CD4-positive, alpha-beta T cell (primary cell): ENCODE measurements at regions of chr2 and their contacts with region 1.

Region 1: DNA sequence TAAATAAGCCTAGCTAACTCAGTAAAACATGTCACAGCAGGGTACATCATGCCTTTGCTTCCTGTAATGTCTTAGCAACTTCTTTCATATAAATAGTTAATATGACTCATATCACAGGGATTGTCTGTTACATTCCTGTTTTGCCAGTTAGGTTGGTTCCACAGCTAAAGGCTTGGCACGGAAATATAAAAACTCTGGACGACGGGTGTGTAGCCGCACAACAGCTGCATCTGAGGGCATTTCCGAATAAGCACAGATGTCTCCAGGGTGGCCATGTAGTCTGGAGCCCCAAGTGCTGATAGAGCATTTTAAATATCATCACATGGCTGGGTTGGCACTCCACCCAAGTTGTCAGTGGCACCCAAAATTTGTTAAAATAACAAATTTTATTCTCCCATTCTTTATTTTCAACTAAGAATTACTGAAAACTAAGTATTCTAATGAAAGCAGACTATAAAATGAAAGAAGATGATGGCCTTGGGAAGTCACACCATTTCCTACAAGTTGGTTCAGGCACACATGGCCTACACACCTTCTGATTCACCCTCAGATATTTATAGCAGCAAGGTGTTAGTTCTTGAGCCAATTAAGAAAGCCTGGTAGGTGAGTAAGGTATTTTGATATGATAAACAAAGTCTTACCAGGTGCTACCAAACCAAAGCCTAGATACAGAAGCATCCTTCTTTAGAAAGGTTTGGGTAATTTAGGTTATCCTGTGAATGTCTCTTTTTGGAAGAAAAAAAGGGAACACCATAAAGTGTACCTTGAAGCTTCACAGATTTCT is 61.8 kb upstream of the STK17B start:
- DNase-seq: peak in 1 of 14 experiments; percentile 40
- ATAC-seq: no peak
- H3K4me3 ChIP-seq: no peak overlapping the region
- H3K4me3 Mint-ChIP-seq: peak overlapping the region; percentile 23
- H3K27ac ChIP-seq: peak overlapping the region; percentile 19 to 63
- H3K27ac Mint-ChIP-seq: peak overlapping the region; percentile 97
- H3K4me1 ChIP-seq: peaks cover 58% of the 10 kb centered on the region
- H3K4me1 Mint-ChIP-seq: peaks cover 94% of the 10 kb centered on the region
- H3K27me3 ChIP-seq: no peaks in the 10 kb centered on the region
- H3K27me3 Mint-ChIP-seq: no peaks in the 10 kb centered on the region
- CTCF ChIP-seq: no peak

Region 2: GRCh38 chr2:196182439-196183171 is 50.6 kb before region 1 on chr2:
- CTCF ChIA-PET with region 1: interaction called, 3 read pairs
- POLR2A ChIA-PET with region 1: interaction called, 60 read pairs
- intact Hi-C with region 1: loop called in 1 of 2 experiments (anchors 2 kb)
- DNase-seq: peak in 2 of 14 experiments; percentile 60 to 74
- ATAC-seq: no peak
- H3K4me3 ChIP-seq: no peak overlapping the region
- H3K4me3 Mint-ChIP-seq: peak overlapping the region; percentile 76
- H3K27ac ChIP-seq: peak overlapping the region; percentile 68 to 79
- H3K27ac Mint-ChIP-seq: peak overlapping the region; percentile 94
- H3K4me1 ChIP-seq: peaks cover 76% of the 10 kb centered on the region
- H3K4me1 Mint-ChIP-seq: peaks cover 94% of the 10 kb centered on the region
- H3K27me3 ChIP-seq: no peaks in the 10 kb centered on the region
- H3K27me3 Mint-ChIP-seq: no peaks in the 10 kb centered on the region
- CTCF ChIP-seq: no peak

Region 3: GRCh38 chr2:196205881-196206435 is 27.3 kb before region 1 on chr2:
- CTCF ChIA-PET with region 1: interaction called, 4 read pairs
- POLR2A ChIA-PET with region 1: interaction called, 10 read pairs
- intact Hi-C with region 1: no loop called
- DNase-seq: no peak
- ATAC-seq: no peak
- H3K4me3 ChIP-seq: no peak overlapping the region
- H3K4me3 Mint-ChIP-seq: no peak overlapping the region
- H3K27ac ChIP-seq: no peak overlapping the region
- H3K27ac Mint-ChIP-seq: peak overlapping the region; percentile 43
- H3K4me1 ChIP-seq: peaks cover 34% of the 10 kb centered on the region
- H3K4me1 Mint-ChIP-seq: peaks cover 45% of the 10 kb centered on the region
- H3K27me3 ChIP-seq: no peaks in the 10 kb centered on the region
- H3K27me3 Mint-ChIP-seq: no peaks in the 10 kb centered on the region
- CTCF ChIP-seq: no peak

Region 4: DNA sequence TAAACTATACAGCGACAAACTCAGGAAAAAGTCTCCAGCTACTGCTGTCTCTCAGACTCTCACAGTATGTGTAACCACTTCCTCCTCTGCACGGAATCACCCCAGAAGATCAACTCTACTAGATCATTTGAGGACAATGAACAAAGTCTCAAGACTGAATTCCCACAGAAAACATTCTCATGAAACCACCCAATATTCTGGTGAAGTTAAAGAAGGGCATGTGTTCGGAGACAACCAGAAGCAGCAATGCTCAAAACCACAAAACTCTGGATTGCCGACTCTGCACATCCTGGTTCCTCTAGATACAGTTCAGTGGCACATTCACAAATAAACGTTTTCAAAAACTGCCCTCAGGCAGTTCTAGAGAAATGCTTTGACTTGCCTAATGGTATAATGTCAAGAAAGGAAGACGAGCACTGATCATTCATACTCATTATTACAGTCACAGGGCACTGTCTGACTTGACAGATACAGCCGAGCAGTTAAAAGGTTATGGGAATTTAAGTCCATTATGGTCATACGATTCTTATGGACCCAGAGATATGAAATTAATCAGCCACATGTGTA is 30.1 kb after region 1 on chr2:
- CTCF ChIA-PET with region 1: interaction called, 3 read pairs
- POLR2A ChIA-PET with region 1: interaction called, 98 read pairs
- intact Hi-C with region 1: loop called (anchors 2 to 5 kb)
- DNase-seq: peak in 11 of 14 experiments; percentile 14 to 87 (median 42)
- ATAC-seq: peak; percentile 79
- H3K4me3 ChIP-seq: peak overlapping the region; percentile 28
- H3K4me3 Mint-ChIP-seq: peak overlapping the region; percentile 43
- H3K27ac ChIP-seq: peak overlapping the region; percentile 79 to 85
- H3K27ac Mint-ChIP-seq: peak overlapping the region; percentile 84
- H3K4me1 ChIP-seq: peaks cover 48% of the 10 kb centered on the region
- H3K4me1 Mint-ChIP-seq: peaks cover 88% of the 10 kb centered on the region
- H3K27me3 ChIP-seq: no peaks in the 10 kb centered on the region
- H3K27me3 Mint-ChIP-seq: no peaks in the 10 kb centered on the region
- CTCF ChIP-seq: no peak

Region 5: GRCh38 chr2:196268538-196269338 is 35.5 kb after region 1 on chr2:
- CTCF ChIA-PET with region 1: interaction called, 3 read pairs
- POLR2A ChIA-PET with region 1: interaction called, 4 read pairs
- intact Hi-C with region 1: loop called (anchors 2 to 5 kb)
- DNase-seq: peak in 3 of 14 experiments; percentile 44 to 62 (median 50)
- ATAC-seq: peak; percentile 53
- H3K4me3 ChIP-seq: peak overlapping the region; percentile 28
- H3K4me3 Mint-ChIP-seq: peak overlapping the region; percentile 59
- H3K27ac ChIP-seq: peak overlapping the region; percentile 39 to 53
- H3K27ac Mint-ChIP-seq: peak overlapping the region; percentile 83
- H3K4me1 ChIP-seq: peaks cover 17% of the 10 kb centered on the region
- H3K4me1 Mint-ChIP-seq: peaks cover 65% of the 10 kb centered on the region
- H3K27me3 ChIP-seq: no peaks in the 10 kb centered on the region
- H3K27me3 Mint-ChIP-seq: no peaks in the 10 kb centered on the region
- CTCF ChIP-seq: no peak